Activated T-helper 2 cell treated with anti-CD3 and anti-CD28 coated beads, Interferon-gamma antibody, Interleukin-2, Interleukin-4, amounts not matched to agents 10 μg/mL and 5 μg/mL and 100 μg/mL, durations not matched to agents 14 hours and 24 hours and 36 hours (primary cell): ENCODE measurements at regions of chr9 and their contacts with region 1.

Region 1: GRCh38 chr9:20209391-20210340 is 412.6 kb downstream of the MLLT3 start:
- DNase-seq: peak; percentile 46
- H3K4me3 Mint-ChIP-seq: peak overlapping the region; percentile 23
- H3K27ac Mint-ChIP-seq: peak overlapping the region; percentile 84
- H3K4me1 Mint-ChIP-seq: peaks cover 31% of the 10 kb centered on the region
- H3K27me3 Mint-ChIP-seq: no peaks in the 10 kb centered on the region

Region 2: DNA sequence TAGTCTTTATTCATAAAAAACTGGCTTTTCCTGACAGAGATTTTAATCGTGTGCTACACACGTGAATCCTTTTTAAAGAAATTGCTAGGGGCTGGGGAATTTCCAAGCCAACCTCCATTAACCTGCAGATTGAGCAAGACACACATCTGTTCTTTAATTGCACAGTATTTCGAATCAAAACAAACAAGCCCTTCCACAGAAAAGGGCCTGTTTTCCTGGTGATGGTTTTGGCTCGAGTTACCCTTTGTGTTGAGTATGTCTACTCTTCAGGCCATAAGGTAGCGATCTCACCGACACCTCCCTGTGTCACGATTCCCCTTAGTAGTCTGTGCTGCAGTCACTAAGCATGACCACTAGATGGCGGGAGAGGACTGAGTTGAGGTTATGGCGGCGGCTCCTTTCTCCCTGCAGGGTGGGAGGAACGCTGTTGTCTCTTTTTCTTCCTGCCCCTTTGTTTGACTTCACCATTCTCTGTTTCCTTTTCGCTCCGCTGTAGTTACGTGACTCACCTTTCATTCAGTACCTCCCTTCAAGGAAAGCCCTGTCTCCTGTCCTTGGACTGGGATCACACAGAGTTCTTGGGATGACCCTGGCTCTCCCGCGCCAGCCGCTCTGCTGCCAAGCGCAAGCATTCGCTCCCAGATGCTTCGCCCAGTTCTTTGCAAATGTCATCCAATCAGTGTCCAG is 283.7 kb before region 1 on chr9:
- intact Hi-C with region 1: loop called (anchors 1 kb)
- DNase-seq: peak; percentile 74
- H3K4me3 Mint-ChIP-seq: peak overlapping the region; percentile 64
- H3K27ac Mint-ChIP-seq: no peak overlapping the region
- H3K4me1 Mint-ChIP-seq: peaks cover 14% of the 10 kb centered on the region
- H3K27me3 Mint-ChIP-seq: peaks cover 24% of the 10 kb centered on the region

Region 3: GRCh38 chr9:19999491-20000057 is 210.1 kb before region 1 on chr9:
- intact Hi-C with region 1: loop called (anchors 5 kb)
- DNase-seq: peak; percentile 55
- H3K4me3 Mint-ChIP-seq: no peak overlapping the region
- H3K27ac Mint-ChIP-seq: peak overlapping the region; percentile 91
- H3K4me1 Mint-ChIP-seq: peaks cover 51% of the 10 kb centered on the region
- H3K27me3 Mint-ChIP-seq: no peaks in the 10 kb centered on the region

Region 4: DNA sequence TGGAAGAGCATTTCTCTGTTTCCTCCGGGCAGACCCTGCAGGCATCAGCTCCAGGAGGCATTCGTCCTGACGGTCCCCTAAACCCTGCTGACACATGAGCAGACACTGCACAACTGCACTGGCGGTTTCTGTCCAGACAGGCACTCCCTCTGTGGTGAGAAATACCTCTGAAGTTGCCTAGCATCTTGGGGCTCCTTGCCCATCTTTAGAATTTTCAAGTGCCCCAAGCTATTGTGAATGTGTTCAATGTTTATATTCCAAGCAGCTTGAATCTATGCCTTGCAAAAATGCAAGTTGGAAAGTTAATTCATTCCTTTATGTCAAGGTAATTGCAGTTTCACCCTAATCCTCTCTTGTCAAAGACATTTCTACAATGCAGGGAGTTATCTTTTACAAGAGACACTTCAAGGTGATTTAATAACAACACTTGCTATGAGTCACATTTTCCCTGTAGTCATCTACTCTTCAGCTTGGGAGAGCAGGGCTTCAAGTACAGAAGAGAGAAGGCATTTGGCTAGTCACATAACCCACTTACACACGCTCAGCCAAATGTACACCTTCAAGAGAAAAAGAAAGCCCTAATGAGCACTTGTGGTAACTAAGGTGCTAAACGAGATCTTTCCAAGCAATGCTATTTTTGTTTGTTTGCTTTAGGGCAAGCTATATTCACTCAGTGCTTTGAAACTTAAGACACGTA is 110.1 kb after region 1 on chr9:
- intact Hi-C with region 1: loop called (anchors 1 kb)
- DNase-seq: no peak
- H3K4me3 Mint-ChIP-seq: no peak overlapping the region
- H3K27ac Mint-ChIP-seq: peak overlapping the region; percentile 24
- H3K4me1 Mint-ChIP-seq: peaks cover 41% of the 10 kb centered on the region
- H3K27me3 Mint-ChIP-seq: no peaks in the 10 kb centered on the region

Region 5: GRCh38 chr9:20508242-20508641 is 298.6 kb after region 1 on chr9:
- intact Hi-C with region 1: loop called (anchors 10 kb)
- DNase-seq: peak; percentile 43
- H3K4me3 Mint-ChIP-seq: no peak overlapping the region
- H3K27ac Mint-ChIP-seq: peak overlapping the region; percentile 3
- H3K4me1 Mint-ChIP-seq: peaks cover 74% of the 10 kb centered on the region
- H3K27me3 Mint-ChIP-seq: no peaks in the 10 kb centered on the region

Region 6: GRCh38 chr9:20684035-20684872 is 474.6 kb after region 1 on chr9 and contains the start of gene FOCAD:
- intact Hi-C with region 1: loop called (anchors 2 kb)
- DNase-seq: peak; percentile 96
- H3K4me3 Mint-ChIP-seq: peak within 1 kb of the TSS; percentile 87
- H3K27ac Mint-ChIP-seq: peak within 1 kb of the TSS; percentile 82
- H3K4me1 Mint-ChIP-seq: peaks cover 21% of the 10 kb centered on the region
- H3K27me3 Mint-ChIP-seq: no peaks in the 10 kb centered on the region
- total RNA-seq, gene FOCAD: 32.2 and 36.0 TPM in 2 replicates

Region 7: GRCh38 chr9:21031091-21031807 is 821.6 kb after region 1 on chr9 and contains the start of gene HACD4:
- intact Hi-C with region 1: loop called (anchors 1 kb)
- DNase-seq: peak; percentile 69
- H3K4me3 Mint-ChIP-seq: peak within 1 kb of the TSS; percentile 67
- H3K27ac Mint-ChIP-seq: peak within 1 kb of the TSS; percentile 56
- H3K4me1 Mint-ChIP-seq: peaks cover 20% of the 10 kb centered on the region
- H3K27me3 Mint-ChIP-seq: peaks cover 3% of the 10 kb centered on the region
- total RNA-seq, gene HACD4: 2.2 and 2.4 TPM in 2 replicates